Panc1 (cell line): ENCODE measurements at regions of chr17 and their contacts with region 1.

Region 1: DNA sequence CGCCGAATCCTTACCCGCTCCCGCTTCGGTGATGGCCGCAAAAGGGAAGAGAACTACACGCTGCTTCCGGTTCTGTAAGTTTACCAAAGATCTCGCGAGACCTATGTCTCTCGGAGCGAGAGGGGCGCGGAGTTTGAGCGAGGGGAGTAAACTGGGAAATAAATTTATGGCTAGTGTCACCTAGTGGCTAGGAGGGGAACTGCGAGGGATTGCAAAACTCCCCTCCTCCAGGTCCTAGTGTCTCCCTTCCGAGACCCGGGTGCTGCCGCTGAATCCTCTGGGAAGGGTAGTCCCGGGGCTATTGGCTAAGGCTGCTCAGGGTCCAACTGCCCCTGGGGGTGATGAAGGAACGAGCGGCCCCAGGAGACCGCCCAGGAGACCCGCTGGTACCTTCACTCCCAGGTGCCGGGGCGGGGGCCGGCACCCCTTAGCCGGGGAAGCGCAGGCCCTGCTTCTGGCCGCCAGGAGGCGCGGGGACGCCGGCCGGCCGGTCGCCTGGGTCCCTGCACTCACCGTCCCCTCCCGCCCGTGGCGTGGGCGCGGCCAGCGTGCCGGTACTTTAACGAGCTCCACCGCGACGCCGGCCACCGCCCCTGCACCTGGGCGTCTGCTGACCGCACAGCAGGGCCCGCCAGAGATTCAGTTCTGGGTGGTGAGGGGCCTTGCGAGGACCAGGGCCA is at the start of gene RPL26:
- DNase-seq: peak; percentile 99
- ATAC-seq: peak; percentile 91
- H3K4me3 ChIP-seq: peak within 1 kb of the TSS; percentile 68 to 99
- H3K27ac ChIP-seq: peak within 1 kb of the TSS; percentile 92
- H3K4me1 ChIP-seq: peaks cover 37% of the 10 kb centered on the region
- H3K27me3 ChIP-seq: no peaks in the 10 kb centered on the region
- CTCF ChIP-seq: peak; percentile 99
- total RNA-seq, gene RPL26: 865 TPM

Region 2: GRCh38 chr17:8300627-8301242 is 82.5 kb before region 1 on chr17:
- CTCF ChIA-PET with region 1: no interaction called
- POLR2A ChIA-PET with region 1: no interaction called
- in situ Hi-C with region 1: no loop called
- intact Hi-C with region 1: no loop called
- DNase-seq: peak; percentile 72
- ATAC-seq: peak; percentile 97
- H3K4me3 ChIP-seq: no peak overlapping the region
- H3K27ac ChIP-seq: no peak overlapping the region
- H3K4me1 ChIP-seq: no peaks in the 10 kb centered on the region
- H3K27me3 ChIP-seq: no peaks in the 10 kb centered on the region
- CTCF ChIP-seq: peak; percentile 89

Region 3: DNA sequence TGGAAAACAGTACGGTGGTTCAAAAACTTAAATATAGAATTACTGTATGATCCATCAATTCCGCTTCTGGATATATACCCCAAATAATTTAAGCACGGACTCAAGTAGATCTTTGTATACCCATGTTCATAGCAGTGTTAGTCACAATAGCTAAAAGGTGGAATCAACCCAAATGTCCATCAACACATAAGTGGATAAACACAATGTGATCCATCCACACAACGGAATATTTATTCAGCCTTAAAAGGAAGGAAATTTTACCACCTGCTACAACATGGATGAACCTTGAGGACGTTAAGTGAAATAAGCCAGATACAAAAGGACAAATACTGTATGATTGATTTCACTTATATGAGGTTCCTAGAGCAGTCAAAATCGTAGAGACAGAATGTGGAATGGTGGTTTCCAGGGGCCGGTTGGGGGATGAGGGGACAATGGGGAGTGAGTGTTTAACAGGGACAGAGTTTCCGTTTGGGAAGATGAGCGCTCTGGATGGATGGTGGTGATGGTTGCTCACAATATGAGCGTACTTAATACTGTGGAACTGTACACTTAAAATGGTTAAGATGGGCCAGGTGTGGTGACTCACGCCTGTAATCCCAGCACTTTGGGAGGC is 19.7 kb after region 1 on chr17:
- CTCF ChIA-PET with region 1: no interaction called
- POLR2A ChIA-PET with region 1: no interaction called
- in situ Hi-C with region 1: no loop called
- intact Hi-C with region 1: no loop called
- DNase-seq: no peak
- ATAC-seq: no peak
- H3K4me3 ChIP-seq: no peak overlapping the region
- H3K27ac ChIP-seq: no peak overlapping the region
- H3K4me1 ChIP-seq: no peaks in the 10 kb centered on the region
- H3K27me3 ChIP-seq: no peaks in the 10 kb centered on the region
- CTCF ChIP-seq: no peak

Region 4: GRCh38 chr17:8745586-8746500 is 362.6 kb after region 1 on chr17:
- CTCF ChIA-PET with region 1: interaction called, 4 read pairs
- POLR2A ChIA-PET with region 1: interaction called, 3 read pairs
- in situ Hi-C with region 1: no loop called
- intact Hi-C with region 1: loop called (anchors 5 kb)
- DNase-seq: no peak
- ATAC-seq: peak; percentile 94
- H3K4me3 ChIP-seq: peak overlapping the region; percentile 46 to 62
- H3K27ac ChIP-seq: no peak overlapping the region
- H3K4me1 ChIP-seq: no peaks in the 10 kb centered on the region
- H3K27me3 ChIP-seq: peaks cover 1% of the 10 kb centered on the region; the same call in 1 of the 2 replicates
- CTCF ChIP-seq: peak; percentile 92

Region 5: GRCh38 chr17:8935191-8935590 is 551.9 kb after region 1 on chr17:
- CTCF ChIA-PET with region 1: interaction called, 11 read pairs
- POLR2A ChIA-PET with region 1: no interaction called
- in situ Hi-C with region 1: no loop called
- intact Hi-C with region 1: no loop called
- DNase-seq: no peak
- ATAC-seq: no peak
- H3K4me3 ChIP-seq: no peak overlapping the region
- H3K27ac ChIP-seq: no peak overlapping the region
- H3K4me1 ChIP-seq: no peaks in the 10 kb centered on the region
- H3K27me3 ChIP-seq: peaks cover 7% of the 10 kb centered on the region
- CTCF ChIP-seq: no peak